Dorsolateral prefrontal cortex (tissue), 120 donors: ENCODE measurements at regions of chr6 and their contacts with region 1.

Region 1: GRCh38 chr6:128311944-128312570 is 208.3 kb downstream of the PTPRK start:
- DNase-seq: no peak
- H3K4me3 ChIP-seq: no peak overlapping the region
- H3K27ac ChIP-seq: no peak overlapping the region
- H3K27me3 ChIP-seq: no peaks in the 10 kb centered on the region
- CTCF ChIP-seq: no peak

Region 2: GRCh38 chr6:126650931-126651330 is 1661.1 kb before region 1 on chr6:
- intact Hi-C with region 1: no loop called
- DNase-seq: no peak
- H3K4me3 ChIP-seq: no peak overlapping the region
- H3K27ac ChIP-seq: no peak overlapping the region
- H3K27me3 ChIP-seq: no peaks in the 10 kb centered on the region
- CTCF ChIP-seq: no peak

Region 3: GRCh38 chr6:128412680-128413079 is 100.6 kb after region 1 on chr6:
- intact Hi-C with region 1: loop called in 1 of 2 experiments (anchors 10 kb)
- DNase-seq: peak in 4 of 10 donors; percentile 13 to 49 (median 44)
- H3K4me3 ChIP-seq: peak overlapping the region in 1 of 59 donors; percentile 3
- H3K27ac ChIP-seq: peak overlapping the region in 6 of 59 donors; percentile 13 to 53 (median 27)
- H3K27me3 ChIP-seq: no peaks in the 10 kb centered on the region
- CTCF ChIP-seq: no peak